MCF 10A (cell line): ENCODE measurements at regions of chr22 and their contacts with region 1.

Region 1: GRCh38 chr22:30005213-30005857 is 74.9 kb upstream of the HORMAD2 start:
- DNase-seq: peak; percentile 83
- H3K4me3 Mint-ChIP-seq: no peak overlapping the region
- H3K27ac Mint-ChIP-seq: no peak overlapping the region
- H3K4me1 Mint-ChIP-seq: no peaks in the 10 kb centered on the region
- H3K27me3 Mint-ChIP-seq: no peaks in the 10 kb centered on the region
- CTCF ChIP-seq: peak; percentile 92

Region 2: DNA sequence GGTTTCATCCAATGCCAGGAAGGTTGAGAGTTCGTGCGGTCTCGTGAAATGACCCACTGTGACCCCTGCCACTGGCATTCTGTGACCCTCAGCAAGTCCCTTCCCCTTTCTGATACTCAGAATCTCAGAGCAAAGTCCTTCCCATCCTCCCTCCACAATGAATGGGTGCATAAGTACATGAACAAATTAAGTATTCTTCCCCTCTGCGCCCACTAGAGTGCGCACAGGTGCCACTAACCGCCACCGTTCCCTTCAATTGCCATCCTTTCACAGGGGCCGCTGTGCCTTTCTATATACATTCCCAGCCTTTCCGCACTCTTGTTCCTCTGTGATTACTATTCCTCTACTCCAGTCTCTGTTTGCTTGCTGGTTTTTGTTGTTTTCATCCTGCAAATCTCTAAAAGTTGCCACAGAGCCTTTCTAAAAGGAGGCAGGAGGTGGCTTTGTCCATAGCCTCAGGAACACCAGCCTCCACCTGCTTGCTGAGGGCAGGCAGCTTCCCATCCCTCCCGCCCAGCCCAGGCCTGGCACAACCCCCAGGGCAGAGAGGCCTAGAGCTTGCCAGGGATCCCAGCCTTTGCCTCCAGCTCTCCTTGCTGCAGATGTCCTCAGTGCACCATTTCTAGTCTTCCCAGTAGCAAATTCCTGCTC is 610.3 kb before region 1 on chr22:
- CTCF ChIA-PET with region 1: no interaction called
- POLR2A ChIA-PET with region 1: no interaction called
- intact Hi-C with region 1: loop called (anchors 5 kb)
- DNase-seq: peak; percentile 75
- H3K4me3 Mint-ChIP-seq: no peak overlapping the region
- H3K27ac Mint-ChIP-seq: no peak overlapping the region
- H3K4me1 Mint-ChIP-seq: peaks cover 13% of the 10 kb centered on the region
- H3K27me3 Mint-ChIP-seq: peaks cover 2% of the 10 kb centered on the region
- CTCF ChIP-seq: peak; percentile 71

Region 3: DNA sequence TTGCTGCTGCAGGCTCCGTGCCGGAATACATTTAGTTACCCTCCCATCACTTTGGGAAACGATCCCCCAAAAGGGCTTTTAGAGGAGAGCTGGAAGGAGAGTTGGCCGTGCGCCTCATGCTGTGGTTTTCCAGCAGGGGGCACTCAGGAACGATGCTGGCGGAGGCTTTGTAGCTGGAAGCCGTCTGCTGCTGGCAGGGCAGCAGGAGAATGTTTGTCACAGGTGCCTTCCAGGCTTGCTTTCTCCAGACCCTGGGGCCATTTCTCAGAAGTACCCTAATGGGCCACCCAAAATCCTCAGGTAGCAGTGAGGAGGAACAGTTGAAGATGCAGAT is 315.5 kb before region 1 on chr22:
- CTCF ChIA-PET with region 1: interaction called, 13 read pairs
- POLR2A ChIA-PET with region 1: no interaction called
- intact Hi-C with region 1: loop called (anchors 1 kb)
- DNase-seq: peak; percentile 50
- H3K4me3 Mint-ChIP-seq: no peak overlapping the region
- H3K27ac Mint-ChIP-seq: no peak overlapping the region
- H3K4me1 Mint-ChIP-seq: no peaks in the 10 kb centered on the region
- H3K27me3 Mint-ChIP-seq: no peaks in the 10 kb centered on the region
- CTCF ChIP-seq: peak; percentile 62

Region 4: DNA sequence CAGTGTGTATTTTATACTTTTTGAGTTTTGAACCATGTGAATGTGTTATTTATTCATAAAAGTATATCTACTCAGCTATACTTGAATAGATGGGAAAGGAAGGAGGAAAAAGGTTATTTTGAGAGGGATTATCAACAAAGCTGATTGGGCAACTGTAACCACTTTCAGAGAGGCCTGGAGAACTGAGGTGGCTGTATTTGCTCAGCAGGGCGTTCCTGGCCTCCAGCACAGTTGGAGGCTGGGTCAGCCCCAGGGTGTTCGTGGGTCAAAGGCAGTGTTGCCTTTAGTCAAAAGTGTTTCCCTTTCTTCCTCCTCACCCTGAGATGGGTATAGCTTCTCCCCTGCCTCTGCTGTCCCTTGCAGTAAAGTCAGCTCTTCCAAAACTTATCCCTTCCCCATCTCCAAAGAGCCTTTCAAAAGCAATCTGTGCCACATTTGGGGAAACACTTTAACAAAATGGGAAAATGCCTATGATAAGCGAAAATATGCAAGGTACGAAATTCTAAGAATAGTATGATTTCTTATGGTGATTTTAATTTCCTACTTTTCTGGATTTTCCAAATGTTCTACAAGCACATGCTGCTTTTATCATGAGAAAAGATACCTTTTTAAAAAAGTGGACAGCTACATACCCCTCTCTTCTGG is 193.8 kb before region 1 on chr22:
- CTCF ChIA-PET with region 1: interaction called, 13 read pairs
- POLR2A ChIA-PET with region 1: no interaction called
- intact Hi-C with region 1: no loop called
- DNase-seq: no peak
- H3K4me3 Mint-ChIP-seq: no peak overlapping the region
- H3K27ac Mint-ChIP-seq: no peak overlapping the region
- H3K4me1 Mint-ChIP-seq: no peaks in the 10 kb centered on the region
- H3K27me3 Mint-ChIP-seq: no peaks in the 10 kb centered on the region
- CTCF ChIP-seq: no peak

Region 5: DNA sequence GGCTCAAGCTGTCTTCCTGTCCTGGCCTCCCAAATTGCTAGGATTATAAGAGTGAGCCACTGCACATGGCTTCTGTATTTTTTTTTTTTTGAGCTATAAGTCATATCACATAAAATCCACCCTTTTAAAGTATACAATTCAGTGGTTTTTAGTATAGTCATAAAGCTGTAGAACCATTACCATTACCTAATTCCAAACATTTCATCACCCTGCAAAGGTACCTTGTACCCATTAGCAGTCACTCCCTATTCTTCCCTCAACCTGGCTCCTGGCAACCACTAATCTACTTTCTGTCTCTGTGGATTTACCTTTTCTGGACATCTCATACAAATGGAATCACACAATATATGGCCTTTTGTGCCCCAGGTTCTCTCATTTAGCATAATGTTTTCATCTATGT is 37.9 kb before region 1 on chr22:
- CTCF ChIA-PET with region 1: no interaction called
- POLR2A ChIA-PET with region 1: no interaction called
- intact Hi-C with region 1: no loop called
- DNase-seq: no peak
- H3K4me3 Mint-ChIP-seq: no peak overlapping the region
- H3K27ac Mint-ChIP-seq: no peak overlapping the region
- H3K4me1 Mint-ChIP-seq: peaks cover 6% of the 10 kb centered on the region
- H3K27me3 Mint-ChIP-seq: no peaks in the 10 kb centered on the region
- CTCF ChIP-seq: no peak

Region 6: GRCh38 chr22:29994027-29994715 is 11.2 kb before region 1 on chr22:
- CTCF ChIA-PET with region 1: interaction called, 34 read pairs
- POLR2A ChIA-PET with region 1: interaction called, 7 read pairs
- intact Hi-C with region 1: no loop called
- DNase-seq: peak; percentile 78
- H3K4me3 Mint-ChIP-seq: no peak overlapping the region
- H3K27ac Mint-ChIP-seq: peak overlapping the region; percentile 86
- H3K4me1 Mint-ChIP-seq: peaks cover 31% of the 10 kb centered on the region
- H3K27me3 Mint-ChIP-seq: no peaks in the 10 kb centered on the region
- CTCF ChIP-seq: peak; percentile 34

Region 7: GRCh38 chr22:30089655-30089974 is 84.3 kb after region 1 on chr22:
- CTCF ChIA-PET with region 1: interaction called, 4 read pairs
- POLR2A ChIA-PET with region 1: no interaction called
- intact Hi-C with region 1: loop called (anchors 5 kb)
- DNase-seq: no peak
- H3K4me3 Mint-ChIP-seq: no peak overlapping the region
- H3K27ac Mint-ChIP-seq: no peak overlapping the region
- H3K4me1 Mint-ChIP-seq: peaks cover 20% of the 10 kb centered on the region
- H3K27me3 Mint-ChIP-seq: no peaks in the 10 kb centered on the region
- CTCF ChIP-seq: no peak